ENCODE measurements at regions of chr3 and their contacts with region 1.

Region 1: GRCh38 chr3:56556908-56557830 is at the start of gene CCDC66:
- DNase-seq: peak; percentile 83 to 98 (median 94)
- ATAC-seq: peak; percentile 94 to 98 (median 97)
- H3K4me3 ChIP-seq: peak within 1 kb of the TSS; percentile 77 to 96
- H3K4me3 Mint-ChIP-seq: peak within 1 kb of the TSS; percentile 94 to 97 (median 97)
- H3K27ac ChIP-seq: peak within 1 kb of the TSS; percentile 96
- H3K27ac Mint-ChIP-seq: peak within 1 kb of the TSS; percentile 97 to 98
- H3K4me1 ChIP-seq: peaks cover 6 to 19% of the 10 kb centered on the region in 2 experiments
- H3K4me1 Mint-ChIP-seq: peaks cover 33 to 45% (median 35%) of the 10 kb centered on the region in 3 donors
- H3K27me3 ChIP-seq: no peaks in the 10 kb centered on the region
- H3K27me3 Mint-ChIP-seq: no peaks in the 10 kb centered on the region
- total RNA-seq, gene CCDC66: 57.8 to 75.2 (median 72.6) TPM

Region 2: DNA sequence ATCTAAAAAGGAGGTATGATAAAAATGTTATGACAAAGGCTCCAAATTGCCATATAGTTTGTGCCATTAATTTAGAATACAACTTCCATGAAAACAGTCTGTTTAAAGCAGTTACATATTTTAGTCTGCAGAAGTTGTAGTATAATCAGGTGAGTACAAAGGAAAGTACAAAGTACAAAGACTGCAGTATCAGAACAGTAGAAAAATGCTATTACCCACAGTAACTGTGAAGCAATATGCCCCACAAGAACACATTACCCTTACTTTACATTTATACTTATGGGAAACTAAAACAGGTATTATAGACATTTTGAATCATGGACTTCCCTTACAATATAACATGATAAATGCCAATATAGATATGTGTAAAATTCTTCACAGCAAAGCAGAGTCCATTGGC is 487.4 kb before region 1 on chr3:
- CTCF ChIA-PET with region 1: no interaction called
- POLR2A ChIA-PET with region 1: no interaction called
- DNase-seq: no peak
- ATAC-seq: no peak
- H3K4me3 ChIP-seq: no peak overlapping the region
- H3K4me3 Mint-ChIP-seq: no peak overlapping the region
- H3K27ac ChIP-seq: no peak overlapping the region
- H3K27ac Mint-ChIP-seq: no peak overlapping the region
- H3K4me1 ChIP-seq: no peaks in the 10 kb centered on the region
- H3K4me1 Mint-ChIP-seq: no peaks in the 10 kb centered on the region
- H3K27me3 ChIP-seq: no peaks in the 10 kb centered on the region
- H3K27me3 Mint-ChIP-seq: peaks cover 0 to 8% of the 10 kb centered on the region in 2 donors

Region 3: DNA sequence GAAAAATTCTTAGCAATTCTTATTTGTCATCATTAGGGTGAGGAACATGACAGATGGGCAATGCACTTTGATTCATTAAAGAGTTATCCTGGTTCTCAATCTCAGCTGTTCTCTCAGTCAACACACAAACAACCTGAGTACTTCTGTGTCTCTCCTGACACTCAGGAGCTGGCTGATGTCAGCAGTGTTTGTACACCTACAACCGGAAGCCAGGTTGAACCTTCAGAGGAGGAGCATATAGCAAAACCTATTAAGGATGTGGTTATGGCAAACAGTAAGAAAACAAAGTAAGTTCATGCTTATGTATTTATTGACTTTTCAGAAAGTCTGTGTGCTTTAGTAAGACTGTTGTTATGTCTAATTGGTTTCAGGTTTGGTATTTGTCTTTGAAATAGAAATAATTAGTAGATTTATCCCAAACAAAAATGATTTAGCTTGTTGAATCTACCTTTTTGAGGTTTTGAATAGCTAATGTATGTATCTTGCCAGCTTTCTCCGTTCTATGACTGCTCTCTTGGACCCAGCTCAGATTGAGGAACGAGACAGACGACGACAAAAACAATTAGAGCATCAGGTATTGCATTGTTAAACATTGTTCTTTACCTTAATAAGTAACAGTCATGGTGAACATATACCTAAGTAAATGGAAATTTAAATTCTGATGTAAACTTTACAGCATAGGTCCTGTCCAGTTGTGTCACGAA is 36.4 kb after region 1 on chr3:
- CTCF ChIA-PET with region 1: interaction called in 1 of 2 experiments, 16 read pairs
- POLR2A ChIA-PET with region 1: interaction called in 1 of 2 experiments, 10 read pairs
- DNase-seq: peak in 34 of 35 experiments; percentile 34 to 86 (median 64)
- ATAC-seq: peak; percentile 99 to 100 (median 100)
- H3K4me3 ChIP-seq: peak overlapping the region; percentile 11 to 19
- H3K4me3 Mint-ChIP-seq: peak overlapping the region; percentile 62 to 80 (median 71)
- H3K27ac ChIP-seq: peak overlapping the region; percentile 79
- H3K27ac Mint-ChIP-seq: peak overlapping the region; percentile 93 to 98
- H3K4me1 ChIP-seq: peaks cover 18 to 27% of the 10 kb centered on the region in 2 experiments
- H3K4me1 Mint-ChIP-seq: peaks cover 75 to 80% (median 77%) of the 10 kb centered on the region in 3 donors
- H3K27me3 ChIP-seq: no peaks in the 10 kb centered on the region
- H3K27me3 Mint-ChIP-seq: no peaks in the 10 kb centered on the region

Region 4: DNA sequence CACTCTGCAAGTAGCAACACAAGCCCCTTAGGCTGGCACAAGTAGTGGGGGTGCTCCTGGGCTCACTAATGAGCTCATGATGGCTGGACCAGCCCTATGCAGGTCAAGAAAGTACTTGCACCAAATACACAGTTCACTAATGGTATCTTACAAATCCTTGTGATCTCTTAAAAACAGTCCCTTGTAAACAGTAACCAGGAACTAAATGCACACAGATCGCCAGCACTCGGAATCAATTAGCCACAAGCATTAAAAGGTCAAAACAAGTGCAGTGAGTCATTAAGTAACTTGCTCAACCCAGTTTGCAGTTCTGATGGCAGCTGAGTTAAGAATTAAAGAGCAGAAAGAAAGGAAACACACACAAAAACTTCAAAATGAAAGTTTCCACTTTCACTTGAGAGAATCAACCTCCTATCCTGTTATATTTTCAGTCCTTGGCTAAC is 201.4 kb after region 1 on chr3:
- CTCF ChIA-PET with region 1: no interaction called
- POLR2A ChIA-PET with region 1: no interaction called
- DNase-seq: peak in 4 of 35 experiments; percentile 5 to 44 (median 20)
- ATAC-seq: peak; percentile 38 to 67 (median 64)
- H3K4me3 ChIP-seq: no peak overlapping the region
- H3K4me3 Mint-ChIP-seq: peak overlapping the region; percentile 15 to 71 (median 57)
- H3K27ac ChIP-seq: peak overlapping the region; percentile 58
- H3K27ac Mint-ChIP-seq: peak overlapping the region; percentile 86 to 87
- H3K4me1 ChIP-seq: peaks cover 40 to 68% of the 10 kb centered on the region in 2 experiments
- H3K4me1 Mint-ChIP-seq: peaks cover 87 to 90% (median 88%) of the 10 kb centered on the region in 3 donors
- H3K27me3 ChIP-seq: no peaks in the 10 kb centered on the region
- H3K27me3 Mint-ChIP-seq: no peaks in the 10 kb centered on the region

Region 5: DNA sequence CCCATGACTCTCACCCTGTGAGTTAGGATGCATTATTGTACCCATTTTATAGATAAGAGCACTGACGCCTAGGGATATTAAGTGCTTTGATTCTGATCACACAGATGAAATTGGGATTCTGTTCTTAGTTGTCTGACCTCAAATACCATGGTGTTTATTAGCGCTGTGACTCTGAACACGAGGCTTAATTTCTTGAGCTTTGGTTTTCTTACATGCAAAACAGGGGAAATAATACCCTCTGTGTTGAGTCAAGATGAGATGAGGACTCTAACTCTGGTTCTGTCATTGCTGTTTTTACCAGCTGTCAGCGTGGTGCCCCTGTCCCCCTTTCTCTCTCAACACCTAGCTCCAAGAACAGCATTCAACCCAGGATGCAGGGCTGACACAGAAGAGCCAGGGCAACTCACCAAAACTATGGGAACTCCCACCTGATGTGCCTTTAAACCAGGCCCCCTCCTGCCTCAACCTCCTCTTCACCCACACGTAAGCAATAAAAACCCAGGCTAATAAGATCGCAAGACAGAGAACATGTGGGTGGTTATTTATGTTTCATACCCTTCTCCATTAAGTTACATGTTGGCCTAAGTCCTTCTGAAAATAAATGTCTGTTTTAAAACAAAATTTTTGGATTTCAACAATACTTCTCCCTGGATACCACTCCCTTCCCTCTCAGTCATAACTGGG is 403.2 kb after region 1 on chr3:
- CTCF ChIA-PET with region 1: no interaction called
- POLR2A ChIA-PET with region 1: no interaction called
- DNase-seq: no peak
- ATAC-seq: no peak
- H3K4me3 ChIP-seq: no peak overlapping the region
- H3K4me3 Mint-ChIP-seq: no peak overlapping the region
- H3K27ac ChIP-seq: no peak overlapping the region
- H3K27ac Mint-ChIP-seq: peak overlapping the region in 1 of 2 donors; percentile 29
- H3K4me1 ChIP-seq: no peaks in the 10 kb centered on the region
- H3K4me1 Mint-ChIP-seq: peaks cover 0 to 2% (median 0%) of the 10 kb centered on the region in 3 donors
- H3K27me3 ChIP-seq: no peaks in the 10 kb centered on the region
- H3K27me3 Mint-ChIP-seq: no peaks in the 10 kb centered on the region

Region 6: GRCh38 chr3:57009807-57010206 is 452.6 kb after region 1 on chr3:
- CTCF ChIA-PET with region 1: no interaction called
- POLR2A ChIA-PET with region 1: interaction called in 1 of 2 experiments, 11 read pairs
- DNase-seq: no peak
- ATAC-seq: no peak
- H3K4me3 ChIP-seq: no peak overlapping the region
- H3K4me3 Mint-ChIP-seq: no peak overlapping the region
- H3K27ac ChIP-seq: no peak overlapping the region
- H3K27ac Mint-ChIP-seq: no peak overlapping the region
- H3K4me1 ChIP-seq: no peaks in the 10 kb centered on the region
- H3K4me1 Mint-ChIP-seq: peaks cover 5 to 11% (median 5%) of the 10 kb centered on the region in 3 donors
- H3K27me3 ChIP-seq: peaks cover 0 to 10% of the 10 kb centered on the region in 2 experiments
- H3K27me3 Mint-ChIP-seq: peaks cover 0 to 11% of the 10 kb centered on the region in 2 donors

Measured in T-cell (primary cell).